Dorsolateral prefrontal cortex (tissue), 120 donors: ENCODE measurements at regions of chr2 and their contacts with region 1.

Region 1: DNA sequence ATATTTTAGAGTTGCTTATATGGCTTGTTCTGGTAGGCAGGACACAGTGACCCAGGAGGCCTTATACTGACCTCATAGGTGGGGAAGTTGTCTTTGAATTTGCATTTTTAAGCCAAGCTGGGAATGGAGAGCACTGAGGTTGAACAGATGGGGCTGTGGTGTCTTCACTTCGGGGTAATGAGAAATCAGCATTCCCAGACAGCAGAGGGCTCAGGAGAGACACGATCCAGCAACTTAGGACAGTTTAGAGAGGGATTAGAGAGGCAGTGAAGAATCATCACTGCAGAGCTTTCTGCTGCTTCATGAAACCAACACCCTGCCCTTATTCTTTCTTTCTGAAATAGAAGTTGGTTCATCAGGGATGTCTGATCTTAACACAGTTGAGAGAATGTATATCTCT is 202.4 kb downstream of the TDRD15 start:
- DNase-seq: no peak
- H3K4me3 ChIP-seq: no peak overlapping the region
- H3K27ac ChIP-seq: no peak overlapping the region
- H3K27me3 ChIP-seq: peaks cover 0 to 7% (median 0%) of the 10 kb centered on the region in 45 donors
- CTCF ChIP-seq: peak in 39 of 56 donors; percentile 12 to 61 (median 31)

Region 2: GRCh38 chr2:21381421-21381820 is 55.3 kb after region 1 on chr2:
- intact Hi-C with region 1: loop called in 1 of 2 experiments (anchors 5 kb)
- DNase-seq: peak in 1 of 10 donors; percentile 20
- H3K4me3 ChIP-seq: peak overlapping the region in 3 of 59 donors; percentile 0 to 9 (median 4)
- H3K27ac ChIP-seq: peak overlapping the region in 40 of 59 donors; percentile 1 to 91 (median 66)
- H3K27me3 ChIP-seq: peaks cover 0 to 7% (median 0%) of the 10 kb centered on the region in 45 donors
- CTCF ChIP-seq: peak in 2 of 56 donors; percentile 3 to 12

Region 3: GRCh38 chr2:21404827-21405625 is 78.9 kb after region 1 on chr2:
- intact Hi-C with region 1: no loop called
- DNase-seq: no peak
- H3K4me3 ChIP-seq: no peak overlapping the region
- H3K27ac ChIP-seq: no peak overlapping the region
- H3K27me3 ChIP-seq: peaks cover 0 to 3% (median 0%) of the 10 kb centered on the region in 45 donors
- CTCF ChIP-seq: no peak